AG04449 (cell line): ENCODE measurements at regions of chr15 and their contacts with region 1.

Region 1: GRCh38 chr15:65610871-65611718 is at the start of gene INTS14:
- DNase-seq: peak; percentile 73
- H3K4me3 ChIP-seq: peak within 1 kb of the TSS; percentile 77
- CTCF ChIP-seq: peak; percentile 81

Region 2: DNA sequence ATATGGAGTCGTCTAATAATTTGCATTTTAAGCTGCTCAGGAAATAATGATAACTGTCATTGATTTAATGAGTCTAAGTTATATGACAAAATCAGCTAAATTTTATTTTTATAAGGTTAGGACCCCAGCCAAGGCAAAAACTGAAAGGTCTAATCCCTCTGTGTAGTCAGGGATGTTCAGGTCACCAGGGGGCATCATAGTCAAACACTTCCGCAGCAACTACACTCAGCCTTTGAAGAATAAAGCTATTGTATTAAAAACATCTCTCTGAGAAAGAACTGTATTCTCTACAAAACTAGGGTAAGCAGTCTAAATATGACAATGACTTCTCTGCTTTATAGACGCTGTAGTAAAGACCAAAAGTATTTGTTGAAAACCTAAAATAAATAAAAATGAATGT is 15.1 kb before region 1 on chr15:
- CTCF ChIA-PET with region 1: interaction called, 16 read pairs
- POLR2A ChIA-PET with region 1: no interaction called
- DNase-seq: no peak
- H3K4me3 ChIP-seq: no peak overlapping the region
- CTCF ChIP-seq: no peak

Region 3: DNA sequence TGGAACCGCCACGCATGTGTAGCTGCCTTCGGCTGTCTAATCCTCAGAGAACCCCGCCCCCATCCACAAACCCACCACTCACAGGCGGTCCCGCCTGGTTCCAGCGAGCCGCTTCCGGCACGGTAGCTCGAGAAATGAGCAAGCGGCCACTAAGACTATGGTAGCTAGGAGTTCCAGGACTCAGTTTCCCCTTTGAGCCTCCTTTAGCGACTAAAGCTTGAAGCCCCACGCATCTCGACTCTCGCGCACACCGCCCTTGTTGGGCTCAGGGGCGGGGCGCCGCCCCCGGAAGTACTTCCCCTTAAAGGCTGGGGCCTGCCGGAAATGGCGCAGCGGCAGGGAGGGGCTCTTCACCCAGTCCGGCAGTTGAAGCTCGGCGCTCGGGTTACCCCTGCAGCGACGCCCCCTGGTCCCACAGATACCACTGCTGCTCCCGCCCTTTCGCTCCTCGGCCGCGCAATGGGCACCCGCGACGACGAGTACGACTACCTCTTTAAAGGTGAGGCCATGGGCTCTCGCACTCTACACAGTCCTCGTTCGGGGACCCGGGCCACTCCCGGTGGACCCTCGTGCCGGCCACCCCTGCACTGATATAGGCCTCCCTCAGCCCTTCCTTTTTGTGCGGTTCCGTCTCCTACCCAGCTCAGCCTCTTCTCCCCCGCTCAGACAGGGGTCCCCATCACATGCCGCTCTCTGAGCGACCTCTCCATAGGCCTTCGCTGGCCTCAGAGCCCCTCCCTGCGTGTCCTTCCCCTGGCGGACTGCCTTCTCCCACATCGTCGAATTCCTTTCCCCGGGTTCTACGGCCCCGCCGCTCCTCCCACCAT is 258.2 kb after region 1 on chr15 and contains the start of gene RAB11A:
- CTCF ChIA-PET with region 1: interaction called, 14 read pairs
- POLR2A ChIA-PET with region 1: interaction called, 16 read pairs
- DNase-seq: peak; percentile 78
- H3K4me3 ChIP-seq: peak within 1 kb of the TSS; percentile 97
- CTCF ChIP-seq: peak; percentile 62